ENCODE measurements at regions of chr17 and their contacts with region 1.

Region 1: GRCh38 chr17:42819944-42820535 is 4.0 kb downstream of the BECN1 start:
- DNase-seq: peak; percentile 64 to 86 (median 67)
- ATAC-seq: peak; percentile 78
- H3K4me3 ChIP-seq: no peak overlapping the region
- H3K27ac ChIP-seq: no peak overlapping the region
- H3K4me1 ChIP-seq: peaks cover 0 to 18% of the 10 kb centered on the region in 2 experiments; a peak in 2 of 5 replicates
- H3K27me3 ChIP-seq: no peaks in the 10 kb centered on the region
- CTCF ChIP-seq: peak; percentile 75 to 90 (median 80)
- EP300 ChIP-seq: no peak
- POLR2A ChIP-seq: no peak
- RAD21 ChIP-seq: peak in 1 of 2 experiments; percentile 42; a peak in 2 of 4 replicates

Region 2: DNA sequence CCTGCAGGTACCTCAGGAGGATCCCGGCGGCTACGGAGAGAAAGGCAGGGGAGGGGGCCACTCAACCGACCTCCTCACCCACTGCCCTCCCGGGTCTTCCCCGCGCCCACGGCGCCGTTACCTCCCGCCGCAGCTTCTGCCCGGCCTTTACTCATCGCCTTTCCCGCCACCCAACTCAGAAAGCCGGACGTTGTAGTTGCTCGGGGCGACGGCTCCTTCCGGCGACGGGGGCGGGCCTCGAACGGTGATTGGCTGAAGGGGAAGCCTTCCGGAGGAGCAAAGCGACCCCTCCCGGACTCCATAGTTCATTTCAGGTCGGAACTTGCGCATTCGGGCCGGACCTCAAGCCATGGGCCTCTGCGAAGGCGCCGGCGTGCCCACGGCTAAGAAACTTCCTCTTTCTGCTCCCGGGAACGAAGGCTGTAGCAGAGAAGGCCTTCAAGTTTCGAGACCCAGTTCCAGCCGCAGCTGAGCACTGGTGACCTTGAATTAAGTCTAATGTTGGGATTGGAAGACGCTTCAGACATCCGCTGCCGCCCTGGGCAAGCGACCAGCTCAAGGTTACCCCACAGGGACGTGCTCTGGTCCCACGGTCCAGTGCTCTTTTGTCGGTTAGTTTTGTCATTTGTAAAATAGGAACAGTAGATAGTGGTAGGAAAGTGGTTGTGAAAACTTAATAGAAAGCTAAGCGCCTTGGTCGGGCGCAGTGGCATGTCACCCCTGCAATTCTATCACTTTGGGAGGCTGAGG is 242.3 kb before region 1 on chr17 and contains the start of gene PSMC3IP:
- CTCF ChIA-PET with region 1: no interaction called
- POLR2A ChIA-PET with region 1: interaction called, 3 read pairs
- in situ Hi-C with region 1: no loop called
- intact Hi-C with region 1: loop called (anchors 1 kb)
- DNase-seq: peak; percentile 97 to 98 (median 98)
- ATAC-seq: peak; percentile 91
- H3K4me3 ChIP-seq: peak within 1 kb of the TSS; percentile 70
- H3K27ac ChIP-seq: peak within 1 kb of the TSS; percentile 94
- H3K4me1 ChIP-seq: peaks cover 23 to 34% of the 10 kb centered on the region in 2 experiments
- H3K27me3 ChIP-seq: no peaks in the 10 kb centered on the region
- CTCF ChIP-seq: peak; percentile 59 to 68 (median 62)
- EP300 ChIP-seq: peak; percentile 38; the same call in 1 of the 2 replicates
- POLR2A ChIP-seq: peak; percentile 92
- RAD21 ChIP-seq: no peak
- polyA plus RNA-seq, gene PSMC3IP: 13.8 to 16.0 TPM

Region 3: DNA sequence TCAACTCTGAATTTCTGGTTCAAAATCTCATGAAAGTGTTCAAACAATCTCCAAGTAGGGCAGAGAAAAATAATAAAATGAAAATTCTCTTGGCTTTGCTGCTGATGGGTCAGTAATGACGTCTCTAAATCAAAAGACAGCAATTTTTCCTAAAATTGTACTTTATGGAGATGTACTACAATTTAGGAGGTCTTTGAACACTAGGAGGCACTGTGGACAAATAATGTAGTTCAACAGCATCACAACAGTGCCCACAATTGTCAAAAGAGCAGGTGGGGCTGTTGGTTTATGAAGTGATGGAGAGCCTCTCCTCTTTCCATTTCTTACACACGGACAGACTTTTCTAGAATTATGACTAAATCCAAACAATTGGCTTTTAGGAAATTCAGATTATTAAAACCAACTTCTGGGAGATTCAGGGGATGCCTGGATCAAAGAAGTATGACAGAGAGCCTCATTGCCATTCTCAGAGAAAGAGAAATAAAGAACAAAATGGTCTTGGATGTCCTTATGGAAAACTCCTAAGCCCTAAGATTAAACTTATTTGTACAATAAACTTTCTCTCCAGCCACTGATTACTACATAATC is 99.0 kb before region 1 on chr17:
- CTCF ChIA-PET with region 1: no interaction called
- POLR2A ChIA-PET with region 1: no interaction called
- in situ Hi-C with region 1: loop called (anchors 5 kb)
- intact Hi-C with region 1: loop called (anchors 2 kb)
- DNase-seq: peak; percentile 60 to 81 (median 62)
- ATAC-seq: peak; percentile 90
- H3K4me3 ChIP-seq: no peak overlapping the region
- H3K27ac ChIP-seq: no peak overlapping the region
- H3K4me1 ChIP-seq: no peaks in the 10 kb centered on the region
- H3K27me3 ChIP-seq: no peaks in the 10 kb centered on the region
- CTCF ChIP-seq: peak; percentile 77 to 90 (median 81)
- EP300 ChIP-seq: peak; percentile 14; the same call in 1 of the 2 replicates
- POLR2A ChIP-seq: no peak
- RAD21 ChIP-seq: peak; percentile 88 to 96

Region 4: GRCh38 chr17:42773290-42774035 is 46.6 kb before region 1 on chr17 and contains the start of gene VPS25:
- CTCF ChIA-PET with region 1: no interaction called
- POLR2A ChIA-PET with region 1: interaction called, 3 read pairs
- in situ Hi-C with region 1: no loop called
- intact Hi-C with region 1: loop called (anchors 2 kb)
- DNase-seq: peak; percentile 83 to 92 (median 86)
- ATAC-seq: peak; percentile 86
- H3K4me3 ChIP-seq: peak within 1 kb of the TSS; percentile 84
- H3K27ac ChIP-seq: peak within 1 kb of the TSS; percentile 85
- H3K4me1 ChIP-seq: peaks cover 27 to 40% of the 10 kb centered on the region in 2 experiments
- H3K27me3 ChIP-seq: no peaks in the 10 kb centered on the region
- CTCF ChIP-seq: peak; percentile 20 to 36 (median 33); a peak in 2 of 6 replicates
- EP300 ChIP-seq: peak; percentile 22; the same call in 1 of the 2 replicates
- POLR2A ChIP-seq: peak; percentile 95
- RAD21 ChIP-seq: peak; percentile 11 to 43; a peak in 2 of 4 replicates
- polyA plus RNA-seq, gene VPS25: 292 to 352 TPM

Region 5: GRCh38 chr17:42798383-42799380 is 21.4 kb before region 1 on chr17 and contains the starts of genes CNTD1 and COA3:
- CTCF ChIA-PET with region 1: no interaction called
- POLR2A ChIA-PET with region 1: interaction called, 10 read pairs
- in situ Hi-C with region 1: no loop called
- intact Hi-C with region 1: no loop called
- DNase-seq: peak; percentile 87 to 91 (median 90)
- ATAC-seq: peak; percentile 98
- H3K4me3 ChIP-seq: peak within 1 kb of the TSS; percentile 73
- H3K27ac ChIP-seq: peak within 1 kb of the TSS; percentile 68
- H3K4me1 ChIP-seq: peaks cover 23 to 36% of the 10 kb centered on the region in 2 experiments
- H3K27me3 ChIP-seq: no peaks in the 10 kb centered on the region
- CTCF ChIP-seq: no peak
- EP300 ChIP-seq: no peak
- POLR2A ChIP-seq: peak; percentile 80
- RAD21 ChIP-seq: no peak
- polyA plus RNA-seq, gene CNTD1: 0.74 to 0.86 TPM
- polyA plus RNA-seq, gene COA3: 113 to 153 TPM

Region 6: DNA sequence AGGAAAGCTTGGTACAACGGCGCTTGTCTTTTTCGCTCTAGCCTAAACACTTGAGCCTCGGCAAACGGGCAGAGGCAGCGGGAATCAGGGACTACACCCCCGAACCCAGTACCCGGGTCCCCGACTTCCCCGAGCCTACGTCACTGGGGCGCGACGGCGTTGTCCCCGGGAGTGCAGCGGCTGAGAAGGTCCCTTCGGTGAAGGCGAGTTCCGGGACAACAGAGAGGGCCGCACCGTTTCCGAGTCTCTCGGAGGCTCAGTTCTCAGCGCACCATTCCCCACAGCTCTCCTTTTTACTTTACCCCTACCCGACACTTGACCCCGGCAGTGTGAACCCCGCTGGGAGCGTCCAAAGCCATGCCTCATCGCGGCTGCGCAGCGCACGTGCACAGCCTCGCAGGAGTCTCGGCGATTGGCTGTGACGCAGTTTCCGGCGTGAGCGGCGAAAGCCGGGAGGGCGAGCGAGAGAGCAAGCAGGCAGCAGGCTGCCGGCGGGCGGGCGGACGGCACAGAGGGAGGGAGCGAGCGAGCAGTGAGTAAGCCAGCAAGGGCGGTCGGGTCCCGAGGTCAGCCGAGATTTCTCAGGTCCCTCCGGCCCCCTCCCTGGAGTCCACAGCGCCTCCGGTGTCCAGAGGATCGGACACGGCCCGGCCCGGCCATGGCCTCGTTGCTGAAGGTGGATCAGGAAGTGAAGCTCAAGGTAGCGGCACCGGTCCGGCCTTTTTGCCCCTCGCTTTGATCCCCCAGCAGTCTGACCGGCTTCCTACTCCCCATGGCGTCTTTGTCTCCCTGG is 13.1 kb after region 1 on chr17 and contains the start of gene PSME3:
- CTCF ChIA-PET with region 1: no interaction called
- POLR2A ChIA-PET with region 1: interaction called, 18 read pairs
- in situ Hi-C with region 1: no loop called
- intact Hi-C with region 1: no loop called
- DNase-seq: peak; percentile 90 to 95 (median 92)
- ATAC-seq: peak; percentile 96
- H3K4me3 ChIP-seq: peak within 1 kb of the TSS; percentile 90
- H3K27ac ChIP-seq: peak within 1 kb of the TSS; percentile 95
- H3K4me1 ChIP-seq: peaks cover 3 to 14% of the 10 kb centered on the region in 2 experiments; a peak in 4 of 5 replicates
- H3K27me3 ChIP-seq: no peaks in the 10 kb centered on the region
- CTCF ChIP-seq: peak in 1 of 3 experiments; percentile 1; a peak in 1 of 6 replicates
- EP300 ChIP-seq: peak; percentile 16; the same call in 1 of the 2 replicates
- POLR2A ChIP-seq: peak; percentile 96
- RAD21 ChIP-seq: no peak; a peak in 1 of 4 replicates
- polyA plus RNA-seq, gene PSME3: 31.2 to 43.2 TPM

Region 7: DNA sequence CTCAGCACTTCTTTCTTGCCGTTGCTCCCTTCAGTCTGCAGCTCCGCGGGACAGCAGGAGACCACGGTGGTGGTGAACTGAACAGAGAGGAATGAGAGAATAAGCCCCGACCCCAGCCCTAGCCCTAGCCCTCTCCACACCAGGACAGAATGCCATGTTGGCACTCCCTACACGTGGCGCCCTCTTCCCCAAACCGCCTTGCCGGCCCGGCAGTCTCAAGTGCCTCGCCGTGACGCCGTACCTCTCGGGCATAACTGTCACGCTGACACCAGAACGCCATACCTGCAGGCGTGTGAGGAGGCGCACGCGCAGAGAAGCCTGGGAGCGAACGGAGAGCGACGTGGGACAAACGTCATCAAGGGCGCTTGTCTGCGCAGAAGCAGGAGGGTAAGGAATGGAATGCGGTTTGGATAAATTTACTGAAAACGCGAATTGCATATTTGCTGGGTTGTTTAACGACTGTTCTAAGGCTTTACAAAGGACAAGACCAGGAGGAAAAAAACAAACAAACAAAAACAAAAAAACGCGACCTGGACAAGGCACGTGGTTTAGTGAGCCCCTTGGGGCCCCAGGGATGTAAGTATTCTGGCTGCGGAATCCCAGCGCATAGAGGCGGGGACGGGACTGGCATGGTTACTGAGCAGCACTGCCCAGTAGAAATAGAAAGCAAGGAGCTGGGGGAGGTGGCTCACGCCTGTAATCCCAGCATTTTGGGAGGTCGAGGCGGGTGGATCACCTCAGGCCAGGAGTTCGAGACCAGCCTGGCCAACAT is 144.3 kb after region 1 on chr17 and contains the start of gene AARSD1:
- CTCF ChIA-PET with region 1: no interaction called
- POLR2A ChIA-PET with region 1: no interaction called
- in situ Hi-C with region 1: no loop called
- intact Hi-C with region 1: no loop called
- DNase-seq: peak; percentile 79 to 97 (median 86)
- ATAC-seq: peak; percentile 94
- H3K4me3 ChIP-seq: peak within 1 kb of the TSS; percentile 67
- H3K27ac ChIP-seq: peak within 1 kb of the TSS; percentile 86
- H3K4me1 ChIP-seq: peaks cover 3 to 10% of the 10 kb centered on the region in 2 experiments; a peak in 4 of 5 replicates
- H3K27me3 ChIP-seq: no peaks in the 10 kb centered on the region
- CTCF ChIP-seq: no peak
- EP300 ChIP-seq: no peak
- POLR2A ChIP-seq: peak; percentile 97
- RAD21 ChIP-seq: no peak
- polyA plus RNA-seq, gene AARSD1: 51.7 to 91.5 TPM

Region 8: DNA sequence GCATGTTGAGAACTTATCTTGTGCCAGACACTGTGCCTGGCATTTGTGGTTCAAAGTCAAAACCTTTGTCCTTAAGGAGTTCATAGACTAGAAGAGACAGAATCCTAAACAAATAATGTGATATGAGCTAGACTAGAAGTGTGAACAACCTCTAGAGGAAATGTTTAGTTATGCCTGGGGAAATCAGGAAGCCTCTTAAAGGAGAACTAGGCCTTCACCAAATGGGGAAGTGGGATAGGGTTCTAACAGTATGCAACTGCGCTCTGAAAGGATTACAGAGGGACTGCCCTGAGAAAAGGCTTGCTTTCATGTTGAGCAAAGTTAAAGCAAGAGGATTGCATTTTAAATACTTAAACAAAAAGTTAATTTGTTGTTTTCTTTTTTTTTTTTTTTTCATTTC is 165.2 kb after region 1 on chr17:
- CTCF ChIA-PET with region 1: no interaction called
- POLR2A ChIA-PET with region 1: no interaction called
- in situ Hi-C with region 1: no loop called
- intact Hi-C with region 1: no loop called
- DNase-seq: no peak
- ATAC-seq: no peak
- H3K4me3 ChIP-seq: no peak overlapping the region
- H3K27ac ChIP-seq: peak overlapping the region; percentile 15; the same call in 1 of the 3 replicates
- H3K4me1 ChIP-seq: peaks cover 11 to 13% of the 10 kb centered on the region in 2 experiments; a peak in 4 of 5 replicates
- H3K27me3 ChIP-seq: no peaks in the 10 kb centered on the region
- CTCF ChIP-seq: no peak
- EP300 ChIP-seq: no peak
- POLR2A ChIP-seq: no peak
- RAD21 ChIP-seq: no peak

Measured in K562 (cell line).